GM12878 (cell line): ENCODE measurements at regions of chr17 and their contacts with region 1.

Region 1: GRCh38 chr17:32253117-32253611 is 12.5 kb upstream of the RHBDL3 start:
- DNase-seq: no peak
- ATAC-seq: peak; percentile 99
- H3K4me3 ChIP-seq: no peak overlapping the region
- H3K27ac ChIP-seq: no peak overlapping the region
- H3K4me1 ChIP-seq: no peaks in the 10 kb centered on the region; the same call in 1 of the 2 replicates
- H3K27me3 ChIP-seq: peaks cover 0 to 2% of the 10 kb centered on the region in 2 experiments; a peak in 1 of 4 replicates
- CTCF ChIP-seq: peak; percentile 98 to 99 (median 99); a peak in 5 of 6 replicates
- EP300 ChIP-seq: no peak
- POLR2A ChIP-seq: no peak
- RAD21 ChIP-seq: peak; percentile 93

Region 2: DNA sequence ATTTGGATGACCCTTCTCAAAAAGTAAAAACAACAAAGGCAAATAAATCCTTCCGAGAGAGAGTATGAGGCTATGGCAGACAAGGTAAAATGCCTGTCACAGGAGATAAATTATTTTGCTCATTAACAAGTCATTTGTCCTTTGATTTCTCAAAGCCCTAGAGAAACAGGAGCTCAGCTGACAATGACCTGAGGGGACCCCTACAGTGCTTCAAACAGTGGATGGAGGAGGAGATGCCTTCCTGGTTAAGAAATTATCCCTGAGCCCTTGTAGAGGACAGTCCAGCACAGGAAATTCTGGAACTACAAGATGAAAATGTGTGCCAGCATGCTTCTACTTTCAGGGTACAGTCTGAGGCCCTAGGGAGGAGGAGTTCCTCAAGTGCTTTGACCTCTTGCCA is 11.5 kb before region 1 on chr17:
- CTCF ChIA-PET with region 1: interaction called, 11 read pairs
- POLR2A ChIA-PET with region 1: no interaction called
- RAD21 ChIA-PET with region 1: interaction called, 3 read pairs
- SMC1A ChIA-PET with region 1: no interaction called
- in situ Hi-C with region 1: no loop called
- intact Hi-C with region 1: no loop called
- DNase-seq: no peak
- ATAC-seq: no peak
- H3K4me3 ChIP-seq: no peak overlapping the region
- H3K27ac ChIP-seq: no peak overlapping the region
- H3K4me1 ChIP-seq: no peaks in the 10 kb centered on the region
- H3K27me3 ChIP-seq: no peaks in the 10 kb centered on the region
- CTCF ChIP-seq: no peak
- EP300 ChIP-seq: no peak
- POLR2A ChIP-seq: no peak
- RAD21 ChIP-seq: no peak

Region 3: GRCh38 chr17:32327911-32328310 is 74.7 kb after region 1 on chr17:
- CTCF ChIA-PET with region 1: interaction called, 6 read pairs
- POLR2A ChIA-PET with region 1: no interaction called
- RAD21 ChIA-PET with region 1: interaction called, 10 read pairs
- SMC1A ChIA-PET with region 1: interaction called, 3 read pairs
- in situ Hi-C with region 1: no loop called
- intact Hi-C with region 1: no loop called
- DNase-seq: no peak
- ATAC-seq: no peak
- H3K4me3 ChIP-seq: no peak overlapping the region
- H3K27ac ChIP-seq: no peak overlapping the region
- H3K4me1 ChIP-seq: peaks cover 7% of the 10 kb centered on the region
- H3K27me3 ChIP-seq: no peaks in the 10 kb centered on the region
- CTCF ChIP-seq: no peak
- EP300 ChIP-seq: no peak
- POLR2A ChIP-seq: no peak
- RAD21 ChIP-seq: no peak

Region 4: GRCh38 chr17:32444308-32445073 is 191.3 kb after region 1 on chr17 and contains the start of gene PSMD11:
- CTCF ChIA-PET with region 1: interaction called, 7 read pairs
- POLR2A ChIA-PET with region 1: no interaction called
- RAD21 ChIA-PET with region 1: no interaction called
- SMC1A ChIA-PET with region 1: interaction called, 4 read pairs
- in situ Hi-C with region 1: no loop called
- intact Hi-C with region 1: loop called (anchors 2 kb)
- DNase-seq: peak; percentile 78
- ATAC-seq: peak; percentile 97
- H3K4me3 ChIP-seq: peak within 1 kb of the TSS; percentile 97
- H3K27ac ChIP-seq: peak within 1 kb of the TSS; percentile 81
- H3K4me1 ChIP-seq: peaks cover 3% of the 10 kb centered on the region
- H3K27me3 ChIP-seq: no peaks in the 10 kb centered on the region
- CTCF ChIP-seq: peak; percentile 91 to 97 (median 92)
- EP300 ChIP-seq: no peak
- POLR2A ChIP-seq: peak; percentile 87
- RAD21 ChIP-seq: peak; percentile 49
- polyA plus RNA-seq, gene PSMD11: 283 to 291 TPM